ENCODE measurements at regions of chr5 and their contacts with region 1.

Region 1: DNA sequence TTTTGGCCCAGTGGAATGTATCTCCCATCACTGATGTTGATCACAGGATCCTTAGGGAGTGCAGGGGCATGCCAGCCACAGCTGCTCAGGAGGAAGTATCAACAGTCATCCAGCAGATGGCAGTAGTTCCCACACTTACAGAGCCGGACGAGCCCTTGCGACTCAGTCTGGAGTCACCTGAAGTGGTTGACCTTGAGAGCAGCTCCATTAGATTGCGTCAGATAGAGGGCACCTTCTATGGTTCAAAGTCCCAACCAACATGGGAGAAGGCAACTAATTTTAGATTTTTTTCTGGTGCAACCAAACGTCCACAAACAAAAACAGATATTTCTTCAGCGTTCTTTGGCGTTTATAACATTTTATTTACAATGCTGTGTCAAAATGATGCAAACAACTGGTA is 124.5 kb downstream of the EGFLAM start:
- DNase-seq: peak in 7 of 9 experiments; percentile 18 to 62 (median 45)
- ATAC-seq: peak; percentile 57
- H3K4me3 ChIP-seq: no peak overlapping the region
- H3K4me3 Mint-ChIP-seq: no peak overlapping the region
- H3K27ac ChIP-seq: no peak overlapping the region
- H3K27ac Mint-ChIP-seq: no peak overlapping the region
- H3K4me1 ChIP-seq: peaks cover 3% of the 10 kb centered on the region
- H3K4me1 Mint-ChIP-seq: peaks cover 17% of the 10 kb centered on the region
- H3K27me3 ChIP-seq: no peaks in the 10 kb centered on the region
- H3K27me3 Mint-ChIP-seq: peaks cover 25% of the 10 kb centered on the region
- CTCF ChIP-seq: peak; percentile 59

Region 2: GRCh38 chr5:38273624-38274023 is 109.3 kb before region 1 on chr5:
- CTCF ChIA-PET with region 1: no interaction called
- POLR2A ChIA-PET with region 1: no interaction called
- intact Hi-C with region 1: no loop called
- DNase-seq: no peak
- ATAC-seq: no peak
- H3K4me3 ChIP-seq: no peak overlapping the region
- H3K4me3 Mint-ChIP-seq: no peak overlapping the region
- H3K27ac ChIP-seq: no peak overlapping the region
- H3K27ac Mint-ChIP-seq: no peak overlapping the region
- H3K4me1 ChIP-seq: no peaks in the 10 kb centered on the region
- H3K4me1 Mint-ChIP-seq: no peaks in the 10 kb centered on the region
- H3K27me3 ChIP-seq: no peaks in the 10 kb centered on the region
- H3K27me3 Mint-ChIP-seq: peaks cover 9% of the 10 kb centered on the region
- CTCF ChIP-seq: no peak

Region 3: GRCh38 chr5:38364825-38365224 is 18.1 kb before region 1 on chr5:
- CTCF ChIA-PET with region 1: interaction called, 13 read pairs
- POLR2A ChIA-PET with region 1: interaction called, 3 read pairs
- intact Hi-C with region 1: no loop called
- DNase-seq: no peak
- ATAC-seq: no peak
- H3K4me3 ChIP-seq: no peak overlapping the region
- H3K4me3 Mint-ChIP-seq: no peak overlapping the region
- H3K27ac ChIP-seq: no peak overlapping the region
- H3K27ac Mint-ChIP-seq: no peak overlapping the region
- H3K4me1 ChIP-seq: peaks cover 4% of the 10 kb centered on the region
- H3K4me1 Mint-ChIP-seq: peaks cover 17% of the 10 kb centered on the region
- H3K27me3 ChIP-seq: no peaks in the 10 kb centered on the region
- H3K27me3 Mint-ChIP-seq: peaks cover 6% of the 10 kb centered on the region
- CTCF ChIP-seq: no peak

Measured in CD8-positive, alpha-beta T cell (primary cell).